ENCODE measurements at regions of chrX and their contacts with region 1.

Region 1: GRCh38 chrX:24465532-24465865 is 413 bp downstream of the PDK3 start:
- DNase-seq: no peak
- ATAC-seq: no peak
- H3K4me3 ChIP-seq: peak overlapping the region; percentile 51 to 59
- H3K27ac ChIP-seq: no peak overlapping the region
- H3K4me1 ChIP-seq: no peaks in the 10 kb centered on the region
- H3K27me3 ChIP-seq: no peaks in the 10 kb centered on the region
- CTCF ChIP-seq: no peak

Region 2: DNA sequence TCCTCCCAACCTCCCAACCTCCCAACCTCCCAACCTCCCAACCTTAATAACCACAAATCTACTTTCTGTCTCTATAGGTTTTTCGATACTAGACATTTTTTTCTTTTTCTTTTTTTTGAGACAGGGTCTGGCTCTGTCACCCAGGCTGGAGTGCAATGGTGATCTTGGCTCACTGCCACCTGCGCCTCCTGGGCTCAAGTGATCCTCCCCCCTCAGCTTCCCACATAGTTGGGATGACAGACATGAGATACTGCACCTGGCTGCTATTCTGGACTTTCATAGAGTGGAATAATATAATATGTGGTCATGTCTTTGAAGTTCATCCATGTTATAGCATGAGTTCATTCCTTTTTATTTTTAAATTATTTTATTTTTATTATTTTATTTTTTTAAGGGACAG is 355.4 kb before region 1 on chrX:
- CTCF ChIA-PET with region 1: no interaction called
- POLR2A ChIA-PET with region 1: no interaction called
- in situ Hi-C with region 1: no loop called
- intact Hi-C with region 1: no loop called
- DNase-seq: no peak
- ATAC-seq: no peak
- H3K4me3 ChIP-seq: no peak overlapping the region
- H3K27ac ChIP-seq: no peak overlapping the region
- H3K4me1 ChIP-seq: no peaks in the 10 kb centered on the region
- H3K27me3 ChIP-seq: no peaks in the 10 kb centered on the region
- CTCF ChIP-seq: no peak

Region 3: GRCh38 chrX:24515447-24515846 is 49.9 kb after region 1 on chrX:
- CTCF ChIA-PET with region 1: no interaction called
- POLR2A ChIA-PET with region 1: interaction called, 13 read pairs
- in situ Hi-C with region 1: no loop called
- intact Hi-C with region 1: no loop called
- DNase-seq: no peak
- ATAC-seq: no peak
- H3K4me3 ChIP-seq: no peak overlapping the region
- H3K27ac ChIP-seq: no peak overlapping the region
- H3K4me1 ChIP-seq: no peaks in the 10 kb centered on the region
- H3K27me3 ChIP-seq: no peaks in the 10 kb centered on the region
- CTCF ChIP-seq: peak; percentile 46; the same call in 1 of the 2 replicates

Region 4: DNA sequence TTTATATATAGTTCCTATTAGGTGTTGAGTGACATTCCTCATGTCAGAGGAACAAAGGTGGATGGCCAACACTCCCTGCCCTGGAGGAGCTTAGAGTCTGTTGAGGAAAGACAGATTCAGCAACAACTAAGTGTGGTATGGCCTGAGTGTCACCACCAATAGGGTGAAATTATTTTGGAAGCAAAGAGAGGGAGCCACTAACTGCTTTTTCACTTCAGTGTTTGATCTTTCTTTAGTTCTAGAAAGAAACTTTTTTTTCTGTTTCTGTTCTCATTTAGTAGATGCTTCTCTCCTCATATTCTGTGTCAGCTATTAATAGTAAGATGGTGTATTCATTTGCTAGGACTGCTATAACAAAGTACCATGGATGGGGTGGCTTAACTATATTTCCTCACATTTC is 468.8 kb after region 1 on chrX:
- CTCF ChIA-PET with region 1: no interaction called
- POLR2A ChIA-PET with region 1: no interaction called
- in situ Hi-C with region 1: no loop called
- intact Hi-C with region 1: no loop called
- DNase-seq: no peak
- ATAC-seq: no peak
- H3K4me3 ChIP-seq: no peak overlapping the region
- H3K27ac ChIP-seq: no peak overlapping the region
- H3K4me1 ChIP-seq: no peaks in the 10 kb centered on the region
- H3K27me3 ChIP-seq: no peaks in the 10 kb centered on the region
- CTCF ChIP-seq: no peak